ENCODE measurements at regions of chr22 and their contacts with region 1.

Region 1: DNA sequence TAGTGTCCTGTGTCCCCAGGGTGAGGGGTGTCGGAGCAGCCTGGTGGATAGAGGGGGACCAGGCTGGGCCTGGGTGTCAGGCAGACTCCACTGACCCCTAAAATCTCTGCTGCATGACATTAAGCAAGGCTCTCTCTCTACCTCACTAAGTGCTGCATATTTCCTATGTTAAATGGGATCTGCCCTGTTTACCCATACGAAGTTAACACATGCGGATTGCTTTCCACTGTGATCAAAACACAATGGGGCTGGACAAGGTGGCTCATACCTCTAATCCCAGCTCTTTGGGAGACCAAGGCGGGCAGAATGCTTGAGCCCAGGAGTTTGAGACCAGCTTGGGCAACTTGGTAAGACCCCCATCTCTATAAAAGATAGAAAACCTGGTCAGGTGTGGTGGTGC is 426.2 kb downstream of the MIAT start:
- DNase-seq: no peak
- H3K4me3 ChIP-seq: no peak overlapping the region
- H3K27ac ChIP-seq: no peak overlapping the region
- H3K4me1 ChIP-seq: no peaks in the 10 kb centered on the region
- H3K27me3 ChIP-seq: peaks cover 0 to 16% of the 10 kb centered on the region in 2 donors
- CTCF ChIP-seq: no peak
- POLR2A ChIP-seq: no peak

Region 2: GRCh38 chr22:26610072-26610958 is 473.3 kb before region 1 on chr22:
- intact Hi-C with region 1: no loop called
- DNase-seq: no peak
- H3K4me3 ChIP-seq: no peak overlapping the region
- H3K27ac ChIP-seq: no peak overlapping the region
- H3K4me1 ChIP-seq: no peaks in the 10 kb centered on the region
- H3K27me3 ChIP-seq: peaks cover 0 to 11% of the 10 kb centered on the region in 2 donors
- CTCF ChIP-seq: no peak
- POLR2A ChIP-seq: no peak

Region 3: GRCh38 chr22:27019827-27020226 is 63.8 kb before region 1 on chr22:
- intact Hi-C with region 1: no loop called
- DNase-seq: no peak
- H3K4me3 ChIP-seq: no peak overlapping the region
- H3K27ac ChIP-seq: no peak overlapping the region
- H3K4me1 ChIP-seq: no peaks in the 10 kb centered on the region
- H3K27me3 ChIP-seq: peaks cover 0 to 8% of the 10 kb centered on the region in 2 donors
- CTCF ChIP-seq: no peak
- POLR2A ChIP-seq: no peak

Region 4: DNA sequence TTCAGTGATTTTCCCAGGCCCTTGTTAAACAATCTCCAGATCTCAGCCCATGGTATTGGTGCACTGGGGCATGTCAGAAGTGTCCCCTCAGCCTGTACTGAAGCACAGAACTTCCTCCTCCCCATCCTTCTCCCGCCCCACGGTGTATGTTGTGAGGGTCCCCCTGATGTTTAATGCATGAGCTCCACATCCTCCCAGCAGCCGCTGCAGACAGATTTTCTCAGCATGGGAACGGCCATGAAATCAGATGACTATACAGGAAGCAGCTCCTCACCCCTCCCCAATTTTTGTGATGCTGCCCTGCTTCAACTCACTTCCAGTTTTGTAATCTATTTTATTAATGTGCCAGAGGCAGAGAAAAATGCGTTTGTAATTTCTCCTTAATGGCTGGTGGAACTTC is 20.2 kb before region 1 on chr22:
- intact Hi-C with region 1: no loop called
- DNase-seq: no peak
- H3K4me3 ChIP-seq: no peak overlapping the region
- H3K27ac ChIP-seq: no peak overlapping the region
- H3K4me1 ChIP-seq: no peaks in the 10 kb centered on the region
- H3K27me3 ChIP-seq: no peaks in the 10 kb centered on the region
- CTCF ChIP-seq: no peak
- POLR2A ChIP-seq: no peak

Region 5: GRCh38 chr22:27100789-27101188 is 17.2 kb after region 1 on chr22:
- intact Hi-C with region 1: loop called (anchors 1 kb)
- DNase-seq: no peak
- H3K4me3 ChIP-seq: peak overlapping the region in 2 of 3 donors; percentile 9 to 29
- H3K27ac ChIP-seq: no peak overlapping the region
- H3K4me1 ChIP-seq: no peaks in the 10 kb centered on the region
- H3K27me3 ChIP-seq: peaks cover 0 to 2% of the 10 kb centered on the region in 2 donors
- CTCF ChIP-seq: no peak
- POLR2A ChIP-seq: no peak

Measured in breast epithelium (tissue), 4 donors.